Activated CD8-positive, alpha-beta T cell treated with anti-CD3 and anti-CD28 coated beads for 36 hours (primary cell): ENCODE measurements at regions of chr7 and their contacts with region 1.

Region 1: DNA sequence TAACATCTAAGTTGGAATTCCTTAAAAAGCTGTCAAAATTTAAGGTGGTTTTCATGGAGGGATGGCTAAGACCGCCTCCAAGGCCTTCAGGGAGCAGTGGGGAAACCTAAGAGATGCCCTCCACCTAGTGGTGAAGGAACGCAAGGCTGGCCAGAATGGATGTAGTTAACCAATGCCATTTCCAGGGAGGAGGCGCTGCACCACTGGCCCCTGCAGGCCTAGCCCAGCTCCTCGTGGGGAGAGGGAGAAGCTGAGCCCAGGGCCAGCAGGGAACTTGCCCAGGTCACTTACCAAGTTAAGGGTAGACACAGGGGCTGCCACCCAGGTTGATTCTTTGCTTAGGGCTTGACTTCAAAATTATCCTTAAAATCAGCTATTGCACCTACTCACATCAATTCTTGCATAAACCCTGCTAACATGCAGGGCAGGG is 32.0 kb downstream of the FIGNL1 start:
- DNase-seq: peak; percentile 90
- ATAC-seq: peak; percentile 93
- H3K4me3 Mint-ChIP-seq: no peak overlapping the region
- H3K27ac Mint-ChIP-seq: no peak overlapping the region
- H3K4me1 Mint-ChIP-seq: peaks cover 26% of the 10 kb centered on the region
- H3K27me3 Mint-ChIP-seq: no peaks in the 10 kb centered on the region
- CTCF ChIP-seq: peak; percentile 90

Region 2: DNA sequence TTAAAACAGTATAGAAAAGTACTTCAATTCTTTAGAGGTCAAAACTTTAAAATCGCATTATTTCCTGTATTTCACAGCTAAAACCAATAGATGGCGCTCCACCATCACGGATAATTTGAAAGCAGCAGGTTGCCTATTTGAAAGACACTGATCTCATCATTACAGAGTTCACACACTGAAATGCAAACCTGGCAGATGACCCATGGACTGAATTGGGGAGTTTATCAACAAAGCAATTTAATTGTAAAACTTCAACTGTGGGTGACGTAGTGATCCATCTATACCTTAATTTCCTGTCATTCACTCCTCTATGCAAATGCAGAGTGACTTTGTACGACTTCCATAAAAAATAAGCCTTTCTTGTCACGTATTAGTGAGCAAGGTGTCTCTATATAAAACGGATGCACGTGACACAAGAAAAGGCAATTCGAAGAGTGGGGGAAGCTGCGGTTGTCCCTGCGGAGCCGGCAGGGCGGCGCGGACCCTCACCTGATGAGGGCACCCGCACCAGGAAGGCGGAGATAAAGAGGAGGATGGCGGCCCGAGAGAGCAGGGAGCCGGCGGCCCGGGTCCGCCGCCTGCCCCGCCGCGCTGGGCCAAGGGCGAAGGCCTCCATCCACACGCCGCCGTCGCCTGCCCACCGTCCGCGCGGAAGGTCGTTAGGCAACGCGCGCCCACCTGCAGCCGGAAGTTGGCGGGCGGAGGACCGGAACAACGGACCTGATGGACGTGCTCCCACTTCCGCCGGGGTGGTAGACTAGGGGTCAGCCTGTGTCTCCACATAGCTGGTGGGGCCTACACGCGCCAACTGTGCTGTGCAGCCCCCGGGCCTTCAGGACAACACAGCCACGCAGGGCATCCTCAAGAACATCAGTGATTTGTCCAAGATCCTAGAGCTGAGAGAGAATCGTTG is 325.3 kb before region 1 on chr7 and contains the start of gene ZPBP:
- CTCF ChIA-PET with region 1: interaction called, 51 read pairs
- POLR2A ChIA-PET with region 1: no interaction called
- intact Hi-C with region 1: loop called (anchors 5 kb)
- DNase-seq: peak; percentile 71
- ATAC-seq: peak; percentile 81
- H3K4me3 Mint-ChIP-seq: peak within 1 kb of the TSS; percentile 84
- H3K27ac Mint-ChIP-seq: peak within 1 kb of the TSS; percentile 93
- H3K4me1 Mint-ChIP-seq: peaks cover 19% of the 10 kb centered on the region
- H3K27me3 Mint-ChIP-seq: no peaks in the 10 kb centered on the region
- CTCF ChIP-seq: peak; percentile 98
- total RNA-seq, gene ZPBP: 0.36 TPM in 1 of 2 experiments, not detected in the other

Region 3: DNA sequence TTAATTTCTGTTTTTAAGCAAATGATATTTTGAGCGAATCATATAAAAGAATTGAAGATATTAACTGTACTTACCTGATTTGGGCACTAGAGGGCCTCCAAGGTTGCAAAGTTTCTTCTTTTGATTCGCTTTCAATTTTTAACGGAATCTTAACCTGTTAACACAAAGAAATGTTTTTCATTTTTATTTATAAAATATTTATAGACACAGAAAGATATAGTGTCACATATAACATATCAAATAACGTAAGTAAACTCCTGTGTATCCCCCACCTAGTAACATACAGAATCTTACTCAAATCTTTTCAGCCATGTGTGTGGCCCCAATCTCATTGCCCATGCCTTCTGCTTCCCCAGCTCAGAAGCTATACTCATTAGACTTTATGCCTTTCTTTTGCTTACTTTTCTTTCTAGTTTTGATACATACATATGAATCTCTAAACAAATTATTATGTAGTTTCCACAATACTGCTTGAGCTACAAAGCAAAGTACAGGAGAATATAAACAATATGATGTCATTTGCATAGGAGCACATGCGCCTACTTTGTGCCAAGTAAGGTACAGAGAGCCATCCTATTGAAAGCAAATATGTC is 275.6 kb before region 1 on chr7:
- CTCF ChIA-PET with region 1: interaction called, 67 read pairs
- POLR2A ChIA-PET with region 1: no interaction called
- intact Hi-C with region 1: loop called (anchors 1 kb)
- DNase-seq: peak; percentile 56
- ATAC-seq: peak; percentile 68
- H3K4me3 Mint-ChIP-seq: peak overlapping the region; percentile 50
- H3K27ac Mint-ChIP-seq: peak overlapping the region; percentile 87
- H3K4me1 Mint-ChIP-seq: peaks cover 43% of the 10 kb centered on the region
- H3K27me3 Mint-ChIP-seq: peaks cover 3% of the 10 kb centered on the region
- CTCF ChIP-seq: peak; percentile 89

Region 4: DNA sequence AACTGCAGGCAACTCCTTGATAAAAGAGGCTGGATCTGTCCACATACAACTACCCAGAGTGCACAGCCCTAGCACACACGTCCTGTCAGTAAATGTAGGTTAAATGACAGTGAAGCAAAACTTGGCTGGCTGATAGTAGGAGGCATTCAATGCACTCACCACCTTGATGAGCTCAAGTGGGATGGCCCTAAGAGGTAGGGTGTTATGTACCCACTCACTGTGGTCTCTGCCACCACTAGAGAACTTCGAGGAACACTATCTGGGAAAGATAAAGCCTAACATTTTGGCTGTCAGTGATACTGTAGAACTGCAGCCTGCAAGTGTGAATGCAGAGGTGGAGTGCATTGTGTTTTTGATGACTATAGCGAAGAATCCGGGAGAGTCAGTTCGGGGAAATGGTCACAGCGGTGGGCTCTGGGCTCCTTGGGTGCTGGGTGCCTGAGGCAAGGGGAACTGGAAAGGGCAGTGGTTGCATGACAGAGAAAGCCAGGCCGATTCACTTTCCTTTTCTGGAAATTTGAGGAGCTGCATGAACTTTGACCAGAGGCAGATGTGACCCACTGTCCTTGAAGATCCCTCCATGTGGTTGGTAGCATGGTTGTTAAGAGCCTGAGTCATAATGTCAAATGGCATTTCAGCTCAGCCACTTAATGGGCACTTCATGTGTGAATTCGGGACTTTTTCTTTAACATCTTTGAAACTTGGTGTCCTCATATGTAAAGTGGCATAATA is 232.0 kb before region 1 on chr7:
- CTCF ChIA-PET with region 1: interaction called, 10 read pairs
- POLR2A ChIA-PET with region 1: no interaction called
- intact Hi-C with region 1: no loop called
- DNase-seq: no peak
- ATAC-seq: peak; percentile 37
- H3K4me3 Mint-ChIP-seq: no peak overlapping the region
- H3K27ac Mint-ChIP-seq: no peak overlapping the region
- H3K4me1 Mint-ChIP-seq: peaks cover 14% of the 10 kb centered on the region
- H3K27me3 Mint-ChIP-seq: no peaks in the 10 kb centered on the region
- CTCF ChIP-seq: no peak

Region 5: DNA sequence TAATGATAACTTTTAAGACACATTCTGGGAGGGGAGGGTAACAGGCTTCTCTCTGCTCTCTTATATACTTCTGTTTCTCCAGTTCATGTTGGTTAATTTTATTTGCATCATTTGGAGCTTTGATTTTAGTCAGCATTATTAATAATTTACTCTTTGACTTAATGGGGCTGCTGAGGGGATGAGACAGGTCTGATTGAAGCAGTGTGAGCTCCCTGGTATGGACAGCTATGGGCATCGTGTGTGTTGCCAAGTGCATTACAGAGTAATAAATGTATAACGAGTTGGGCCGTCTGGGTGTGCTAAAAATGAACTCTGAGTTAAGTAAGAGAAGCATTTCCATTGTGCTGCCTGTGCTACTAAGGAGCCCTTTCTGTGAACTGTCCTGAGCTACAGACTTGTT is 145.3 kb before region 1 on chr7:
- CTCF ChIA-PET with region 1: no interaction called
- POLR2A ChIA-PET with region 1: no interaction called
- intact Hi-C with region 1: no loop called
- DNase-seq: no peak
- ATAC-seq: no peak
- H3K4me3 Mint-ChIP-seq: no peak overlapping the region
- H3K27ac Mint-ChIP-seq: no peak overlapping the region
- H3K4me1 Mint-ChIP-seq: peaks cover 77% of the 10 kb centered on the region
- H3K27me3 Mint-ChIP-seq: no peaks in the 10 kb centered on the region
- CTCF ChIP-seq: no peak

Region 6: GRCh38 chr7:50369143-50370026 is 48.7 kb before region 1 on chr7:
- CTCF ChIA-PET with region 1: interaction called, 22 read pairs
- POLR2A ChIA-PET with region 1: interaction called, 4 read pairs
- intact Hi-C with region 1: no loop called
- DNase-seq: peak; percentile 60
- ATAC-seq: peak; percentile 24
- H3K4me3 Mint-ChIP-seq: peak overlapping the region; percentile 5
- H3K27ac Mint-ChIP-seq: peak overlapping the region; percentile 95
- H3K4me1 Mint-ChIP-seq: peaks cover 97% of the 10 kb centered on the region
- H3K27me3 Mint-ChIP-seq: no peaks in the 10 kb centered on the region
- CTCF ChIP-seq: peak; percentile 94

Region 7: GRCh38 chr7:50405221-50405620 is 12.9 kb before region 1 on chr7:
- CTCF ChIA-PET with region 1: interaction called, 27 read pairs
- POLR2A ChIA-PET with region 1: interaction called, 12 read pairs
- intact Hi-C with region 1: no loop called
- DNase-seq: no peak
- ATAC-seq: no peak
- H3K4me3 Mint-ChIP-seq: no peak overlapping the region
- H3K27ac Mint-ChIP-seq: peak overlapping the region; percentile 76
- H3K4me1 Mint-ChIP-seq: peaks cover 95% of the 10 kb centered on the region
- H3K27me3 Mint-ChIP-seq: no peaks in the 10 kb centered on the region
- CTCF ChIP-seq: no peak

Region 8: DNA sequence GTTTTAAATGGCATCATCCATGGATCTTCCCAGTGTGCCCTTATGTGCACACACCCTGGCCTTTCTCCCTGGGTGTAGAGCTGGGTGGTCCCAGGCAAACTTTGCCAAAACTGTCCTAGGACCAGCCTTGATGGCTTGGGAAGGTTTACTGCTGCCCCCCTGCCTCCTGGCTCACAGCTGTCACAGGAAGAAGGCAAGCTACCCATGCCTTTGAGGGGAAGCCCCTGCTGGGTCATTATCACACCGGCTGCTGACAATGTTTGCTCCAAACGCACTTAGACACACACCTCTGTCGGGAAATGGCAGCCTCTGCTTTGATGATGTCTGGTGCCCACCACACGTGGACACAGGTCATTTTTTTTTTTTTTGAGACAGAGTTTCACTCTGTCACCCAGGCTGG is 57.2 kb after region 1 on chr7:
- CTCF ChIA-PET with region 1: no interaction called
- POLR2A ChIA-PET with region 1: no interaction called
- intact Hi-C with region 1: no loop called
- DNase-seq: peak; percentile 42
- ATAC-seq: peak; percentile 78
- H3K4me3 Mint-ChIP-seq: no peak overlapping the region
- H3K27ac Mint-ChIP-seq: no peak overlapping the region
- H3K4me1 Mint-ChIP-seq: peaks cover 3% of the 10 kb centered on the region
- H3K27me3 Mint-ChIP-seq: peaks cover 1% of the 10 kb centered on the region
- CTCF ChIP-seq: no peak